Activated naive CD4-positive, alpha-beta T cell treated with anti-CD3 and anti-CD28 coated beads for 36 hours (primary cell): ENCODE measurements at regions of chr5 and their contacts with region 1.

Region 1: GRCh38 chr5:141636413-141637122 is at the starts of genes HDAC3 and RELL2:
- DNase-seq: peak; percentile 94
- H3K4me3 Mint-ChIP-seq: peak within 1 kb of the TSS; percentile 93
- H3K27ac Mint-ChIP-seq: peak within 1 kb of the TSS; percentile 87
- H3K4me1 Mint-ChIP-seq: peaks cover 51% of the 10 kb centered on the region
- H3K27me3 Mint-ChIP-seq: no peaks in the 10 kb centered on the region
- total RNA-seq, gene HDAC3: 52.1 to 55.6 TPM
- total RNA-seq, gene RELL2: 20.9 to 21.1 TPM

Region 2: GRCh38 chr5:140690376-140690932 is 946.1 kb before region 1 on chr5:
- CTCF ChIA-PET with region 1: no interaction called
- intact Hi-C with region 1: no loop called
- DNase-seq: no peak
- H3K4me3 Mint-ChIP-seq: peak overlapping the region; percentile 100
- H3K27ac Mint-ChIP-seq: peak overlapping the region; percentile 97
- H3K4me1 Mint-ChIP-seq: peaks cover 35% of the 10 kb centered on the region
- H3K27me3 Mint-ChIP-seq: no peaks in the 10 kb centered on the region

Region 3: GRCh38 chr5:140700177-140701144 is 936.1 kb before region 1 on chr5 and contains the start of gene ZMAT2:
- CTCF ChIA-PET with region 1: no interaction called
- intact Hi-C with region 1: loop called (anchors 5 kb)
- DNase-seq: peak; percentile 97
- H3K4me3 Mint-ChIP-seq: peak within 1 kb of the TSS; percentile 97
- H3K27ac Mint-ChIP-seq: peak within 1 kb of the TSS; percentile 87
- H3K4me1 Mint-ChIP-seq: peaks cover 24% of the 10 kb centered on the region
- H3K27me3 Mint-ChIP-seq: no peaks in the 10 kb centered on the region
- total RNA-seq, gene ZMAT2: 52.9 to 58.8 TPM

Region 4: DNA sequence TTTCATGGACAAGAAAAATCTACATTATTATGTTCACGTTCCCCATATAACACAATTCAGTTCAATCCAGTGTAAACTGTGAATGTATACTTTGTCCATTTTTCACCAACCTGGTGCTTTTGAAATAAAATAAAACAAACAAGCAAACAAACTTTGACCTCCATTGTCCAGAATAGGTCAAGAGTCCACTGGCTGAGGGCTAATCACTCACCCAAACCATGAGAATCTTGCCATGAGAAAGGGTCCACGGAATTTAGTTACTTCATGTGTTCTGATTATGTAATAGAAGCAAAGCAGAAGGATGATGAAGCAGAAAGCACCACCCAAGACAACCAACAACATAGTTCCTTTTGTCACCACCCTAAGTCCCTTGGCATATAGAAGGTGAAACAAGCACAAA is 46.4 kb before region 1 on chr5:
- CTCF ChIA-PET with region 1: interaction called, 63 read pairs
- intact Hi-C with region 1: loop called (anchors 1 kb)
- DNase-seq: no peak
- H3K4me3 Mint-ChIP-seq: no peak overlapping the region
- H3K27ac Mint-ChIP-seq: no peak overlapping the region
- H3K4me1 Mint-ChIP-seq: peaks cover 36% of the 10 kb centered on the region
- H3K27me3 Mint-ChIP-seq: no peaks in the 10 kb centered on the region

Region 5: DNA sequence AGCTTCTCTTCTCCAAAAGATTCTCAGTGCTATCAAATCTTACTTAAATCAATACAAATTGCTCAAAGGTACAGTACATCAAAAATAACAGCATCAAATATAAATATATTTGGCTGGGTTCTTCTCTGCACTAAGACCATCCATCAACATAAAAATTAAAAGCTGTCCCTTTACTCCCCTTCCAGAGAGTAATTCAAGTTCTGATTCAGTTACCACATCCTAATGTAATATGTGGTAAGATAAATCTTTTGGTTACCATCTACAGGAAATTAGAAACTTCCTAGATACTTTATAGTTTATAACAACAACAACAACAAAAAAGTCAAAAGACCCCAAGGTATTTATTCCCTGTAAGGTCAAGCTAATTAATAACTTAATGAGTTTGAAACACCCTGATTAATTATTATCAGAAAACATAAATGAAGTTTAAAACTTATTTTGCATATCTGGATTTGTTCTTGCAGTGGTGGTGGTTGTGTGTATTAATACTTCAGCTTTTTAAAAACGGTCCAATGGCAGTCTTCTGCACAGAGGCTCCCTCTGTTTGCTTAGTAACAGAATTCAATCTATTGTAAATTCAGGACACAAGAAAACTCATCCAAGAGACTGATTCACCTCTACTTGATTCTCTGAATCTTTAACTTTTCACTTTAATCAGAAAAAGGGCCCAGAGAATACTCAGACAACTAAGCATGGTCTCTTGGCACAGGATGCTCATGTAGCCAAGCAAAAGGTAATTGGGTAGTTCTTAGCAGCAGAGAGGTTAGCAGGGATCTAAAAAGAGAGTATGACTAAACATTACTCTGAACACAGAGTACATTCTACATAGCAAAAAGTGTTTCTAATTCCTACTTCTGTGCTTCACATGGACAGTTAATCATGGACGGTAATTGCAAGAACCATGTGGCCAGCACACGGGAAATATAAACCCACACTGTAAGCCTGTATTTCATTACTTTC is 37.9 kb before region 1 on chr5:
- CTCF ChIA-PET with region 1: interaction called, 63 read pairs
- intact Hi-C with region 1: no loop called
- DNase-seq: no peak
- H3K4me3 Mint-ChIP-seq: no peak overlapping the region
- H3K27ac Mint-ChIP-seq: peak overlapping the region; percentile 65
- H3K4me1 Mint-ChIP-seq: peaks cover 71% of the 10 kb centered on the region
- H3K27me3 Mint-ChIP-seq: no peaks in the 10 kb centered on the region

Region 6: DNA sequence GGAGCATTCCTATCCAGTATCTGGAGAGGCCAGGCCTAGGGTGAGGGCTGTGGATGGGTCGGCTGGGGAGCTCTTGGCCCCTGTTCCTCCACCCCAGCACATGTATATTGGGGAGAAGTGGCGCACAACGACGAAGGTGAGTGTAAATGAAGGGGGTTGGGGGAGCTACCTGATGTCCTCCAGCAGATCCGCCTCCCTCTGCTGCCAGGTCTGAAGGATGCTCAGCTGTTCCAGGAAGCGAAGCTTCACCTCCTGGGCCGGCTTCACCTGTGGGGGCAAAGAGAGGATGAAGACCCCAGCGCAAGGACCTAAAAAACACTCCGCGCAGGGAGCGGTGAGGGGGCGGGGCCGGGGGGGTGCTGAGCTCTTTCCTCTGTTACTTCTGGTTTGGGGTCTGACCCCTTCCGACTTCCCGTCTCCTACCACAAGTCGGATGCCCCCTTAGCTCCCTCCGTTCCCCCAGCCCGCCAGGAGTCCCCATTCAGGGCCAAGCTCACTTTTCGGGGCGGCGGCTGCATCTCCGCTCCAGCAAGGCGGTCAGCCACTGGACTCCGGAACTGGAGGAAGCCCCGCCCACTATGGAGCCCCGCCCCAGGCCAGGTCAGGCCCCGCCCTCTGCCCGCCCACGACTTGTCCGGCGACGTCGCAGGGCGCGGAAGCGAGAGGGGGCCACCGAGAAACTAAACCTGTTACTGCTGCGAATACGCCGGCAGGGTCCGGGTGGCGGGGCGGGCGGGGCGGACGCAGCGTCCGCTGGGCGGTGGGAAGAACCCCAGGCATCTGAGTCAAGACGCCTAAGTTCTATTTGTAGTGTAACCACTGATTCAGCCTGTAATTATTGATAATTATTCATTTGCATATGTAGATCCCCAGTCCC is 14.5 kb after region 1 on chr5 and contains the start of gene FCHSD1:
- CTCF ChIA-PET with region 1: interaction called, 13 read pairs
- intact Hi-C with region 1: loop called (anchors 1 kb)
- DNase-seq: peak; percentile 86
- H3K4me3 Mint-ChIP-seq: peak within 1 kb of the TSS; percentile 89
- H3K27ac Mint-ChIP-seq: peak within 1 kb of the TSS; percentile 84
- H3K4me1 Mint-ChIP-seq: peaks cover 18% of the 10 kb centered on the region
- H3K27me3 Mint-ChIP-seq: no peaks in the 10 kb centered on the region
- total RNA-seq, gene FCHSD1: 28.9 to 29.6 TPM